Motor neuron (in vitro differentiated cells): ENCODE measurements at regions of chr6 and their contacts with region 1.

Region 1: GRCh38 chr6:26025894-26026832 is 61.1 kb upstream of the HFE start:
- ATAC-seq: peak; percentile 19 to 60 (median 54)
- H3K4me3 ChIP-seq: peak overlapping the region; percentile 47 to 56 (median 53)
- H3K27ac ChIP-seq: peak overlapping the region; percentile 54 to 57
- H3K4me1 ChIP-seq: peaks cover 3 to 9% of the 10 kb centered on the region in 2 donors

Region 2: DNA sequence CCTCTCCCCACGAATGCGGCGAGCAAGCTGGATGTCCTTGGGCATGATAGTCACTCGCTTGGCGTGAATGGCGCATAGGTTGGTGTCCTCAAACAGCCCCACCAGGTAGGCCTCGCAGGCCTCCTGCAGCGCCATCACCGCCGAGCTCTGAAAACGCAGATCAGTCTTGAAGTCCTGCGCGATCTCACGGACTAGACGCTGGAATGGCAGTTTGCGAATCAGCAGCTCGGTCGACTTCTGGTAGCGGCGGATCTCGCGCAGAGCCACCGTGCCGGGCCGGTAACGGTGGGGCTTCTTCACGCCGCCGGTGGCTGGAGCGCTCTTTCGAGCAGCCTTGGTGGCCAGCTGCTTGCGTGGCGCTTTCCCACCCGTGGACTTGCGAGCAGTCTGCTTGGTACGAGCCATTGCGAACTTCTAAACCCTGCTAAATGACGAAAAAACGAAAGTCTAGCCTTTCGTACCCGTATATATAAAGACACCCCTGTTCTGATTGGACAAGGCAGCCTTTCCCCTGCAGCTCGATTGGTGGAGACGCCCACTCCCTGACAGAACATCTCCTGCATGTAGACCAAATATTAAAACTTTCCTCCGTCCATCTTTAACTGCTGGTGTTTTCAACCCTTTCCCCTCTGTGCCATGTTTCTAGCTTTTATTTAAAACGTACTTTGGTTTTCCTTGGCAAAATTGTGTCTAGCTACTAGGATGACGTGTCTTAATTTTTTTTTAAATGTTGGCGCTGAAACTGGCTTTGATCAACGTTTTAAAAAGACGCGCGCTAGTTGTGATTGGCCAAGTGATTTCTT is 170.9 kb after region 1 on chr6:
- in situ Hi-C with region 1: loop called in 1 of 9 experiments (anchors 25 kb)
- ATAC-seq: peak; percentile 39 to 63 (median 54)
- H3K4me3 ChIP-seq: peak overlapping the region; percentile 62 to 96 (median 83)
- H3K27ac ChIP-seq: peak overlapping the region in 1 of 2 donors; percentile 12
- H3K4me1 ChIP-seq: peaks cover 0 to 10% of the 10 kb centered on the region in 2 donors

Region 3: GRCh38 chr6:27132532-27133280 is 1106.5 kb after region 1 on chr6:
- in situ Hi-C with region 1: no loop called
- ATAC-seq: peak; percentile 83 to 92 (median 88)
- H3K4me3 ChIP-seq: peak overlapping the region; percentile 56 to 77 (median 60)
- H3K27ac ChIP-seq: peak overlapping the region in 1 of 2 donors; percentile 54
- H3K4me1 ChIP-seq: peaks cover 0 to 2% of the 10 kb centered on the region in 2 donors

Region 4: DNA sequence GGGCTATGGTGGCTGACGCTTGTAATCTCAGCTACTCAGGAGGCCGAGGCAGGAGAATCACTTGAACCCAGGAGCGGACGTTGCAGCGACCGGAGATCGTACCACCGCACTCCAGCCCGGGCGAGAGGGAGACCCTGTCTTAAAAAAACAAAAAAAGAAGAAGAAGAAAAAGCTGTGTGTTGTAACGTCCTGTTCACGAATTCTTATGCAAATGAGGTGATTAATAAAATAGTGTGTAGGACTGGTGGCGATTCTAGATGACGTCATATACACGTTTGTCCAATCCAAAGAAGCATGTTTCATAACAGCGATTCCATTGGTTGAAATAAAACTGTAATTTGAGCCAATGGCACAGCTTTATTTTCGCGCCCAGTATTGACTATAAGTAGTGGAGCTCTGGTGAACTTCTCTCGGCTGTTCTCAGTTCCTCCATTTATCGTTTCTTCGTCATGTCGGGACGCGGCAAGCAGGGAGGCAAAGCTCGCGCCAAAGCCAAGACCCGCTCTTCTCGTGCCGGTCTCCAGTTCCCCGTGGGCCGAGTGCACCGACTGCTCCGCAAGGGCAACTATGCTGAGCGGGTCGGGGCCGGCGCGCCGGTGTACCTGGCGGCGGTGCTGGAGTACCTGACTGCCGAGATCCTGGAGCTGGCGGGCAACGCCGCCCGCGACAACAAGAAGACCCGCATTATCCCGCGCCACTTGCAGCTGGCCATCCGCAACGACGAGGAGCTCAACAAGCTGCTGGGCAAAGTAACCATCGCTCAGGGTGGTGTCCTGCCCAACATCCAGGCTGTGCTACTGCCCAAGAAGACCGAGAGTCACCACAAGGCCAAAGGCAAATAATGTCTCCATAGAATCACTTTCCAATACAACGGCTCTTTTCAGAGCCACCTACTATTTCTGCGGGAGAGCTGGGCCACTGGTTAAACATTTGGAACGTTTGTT is 1839.0 kb after region 1 on chr6:
- in situ Hi-C with region 1: loop called in 1 of 9 experiments (anchors 25 kb)
- ATAC-seq: peak; percentile 71 to 84 (median 76)
- H3K4me3 ChIP-seq: peak overlapping the region; percentile 55 to 84 (median 61)
- H3K27ac ChIP-seq: peak overlapping the region; percentile 35 to 74
- H3K4me1 ChIP-seq: peaks cover 3 to 11% of the 10 kb centered on the region in 2 donors